Activated naive CD8-positive, alpha-beta T cell treated with anti-CD3 and anti-CD28 coated beads, Interleukin-2, amount 10 ng/mL, durations not matched to agents 7 days and 5 days (primary cell): ENCODE measurements at regions of chr18 and their contacts with region 1.

Region 1: GRCh38 chr18:74353169-74353775 is 37.6 kb downstream of the C18orf63 start:
- DNase-seq: no peak
- ATAC-seq: peak; percentile 92
- H3K4me3 Mint-ChIP-seq: no peak overlapping the region
- H3K27ac Mint-ChIP-seq: no peak overlapping the region
- H3K4me1 Mint-ChIP-seq: peaks cover 24% of the 10 kb centered on the region
- H3K27me3 Mint-ChIP-seq: no peaks in the 10 kb centered on the region

Region 2: DNA sequence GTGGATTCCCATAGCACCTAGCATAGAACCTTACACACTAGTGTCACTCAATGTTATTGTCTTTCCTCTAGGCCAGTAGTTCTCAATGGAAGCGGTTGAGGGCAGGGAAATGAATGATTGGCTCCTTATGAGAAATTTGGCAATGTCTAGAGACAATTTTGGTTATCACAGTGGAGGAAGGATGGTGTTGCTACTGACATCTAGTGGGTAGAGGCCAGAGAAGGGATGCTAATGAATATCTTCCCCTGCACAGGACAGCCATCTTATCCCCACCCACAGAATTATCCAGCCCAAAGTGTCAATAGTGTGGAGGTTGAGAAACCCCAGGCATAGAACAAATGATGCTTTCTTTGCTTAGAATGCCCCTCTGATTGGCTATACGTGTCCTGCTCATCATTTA is 21.9 kb before region 1 on chr18:
- POLR2A ChIA-PET with region 1: no interaction called
- DNase-seq: no peak
- ATAC-seq: no peak
- H3K4me3 Mint-ChIP-seq: no peak overlapping the region
- H3K27ac Mint-ChIP-seq: no peak overlapping the region
- H3K4me1 Mint-ChIP-seq: peaks cover 6% of the 10 kb centered on the region
- H3K27me3 Mint-ChIP-seq: peaks cover 7% of the 10 kb centered on the region

Region 3: GRCh38 chr18:74342416-74343043 is 10.7 kb before region 1 on chr18:
- POLR2A ChIA-PET with region 1: no interaction called
- DNase-seq: no peak
- ATAC-seq: no peak
- H3K4me3 Mint-ChIP-seq: no peak overlapping the region
- H3K27ac Mint-ChIP-seq: no peak overlapping the region
- H3K4me1 Mint-ChIP-seq: peaks cover 1% of the 10 kb centered on the region
- H3K27me3 Mint-ChIP-seq: peaks cover 30% of the 10 kb centered on the region

Region 4: DNA sequence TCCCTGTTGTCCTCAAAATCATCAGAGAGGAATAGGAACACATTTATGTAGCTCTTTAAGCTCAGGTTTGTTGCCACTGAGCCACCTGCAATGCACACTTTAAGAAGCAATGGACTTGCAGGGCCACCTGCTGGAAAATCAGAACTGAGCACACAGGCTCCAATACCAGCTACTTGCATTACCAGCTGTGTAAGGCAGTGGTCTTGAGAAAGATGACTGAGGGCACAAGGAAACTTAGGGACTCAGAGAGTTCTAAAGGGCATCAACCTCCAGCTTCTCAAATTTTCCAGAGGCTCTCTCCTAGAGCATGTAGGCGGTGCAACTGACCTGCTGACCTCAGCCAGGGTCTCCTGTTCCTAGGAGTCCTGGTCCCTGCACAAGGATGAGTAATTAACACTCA is 140.4 kb after region 1 on chr18:
- POLR2A ChIA-PET with region 1: interaction called, 11 read pairs
- DNase-seq: peak; percentile 54
- ATAC-seq: peak; percentile 37
- H3K4me3 Mint-ChIP-seq: no peak overlapping the region
- H3K27ac Mint-ChIP-seq: no peak overlapping the region
- H3K4me1 Mint-ChIP-seq: peaks cover 24% of the 10 kb centered on the region
- H3K27me3 Mint-ChIP-seq: peaks cover 2% of the 10 kb centered on the region